Tibial artery (tissue), 4 donors: ENCODE measurements at regions of chr1 and their contacts with region 1.

Region 1: DNA sequence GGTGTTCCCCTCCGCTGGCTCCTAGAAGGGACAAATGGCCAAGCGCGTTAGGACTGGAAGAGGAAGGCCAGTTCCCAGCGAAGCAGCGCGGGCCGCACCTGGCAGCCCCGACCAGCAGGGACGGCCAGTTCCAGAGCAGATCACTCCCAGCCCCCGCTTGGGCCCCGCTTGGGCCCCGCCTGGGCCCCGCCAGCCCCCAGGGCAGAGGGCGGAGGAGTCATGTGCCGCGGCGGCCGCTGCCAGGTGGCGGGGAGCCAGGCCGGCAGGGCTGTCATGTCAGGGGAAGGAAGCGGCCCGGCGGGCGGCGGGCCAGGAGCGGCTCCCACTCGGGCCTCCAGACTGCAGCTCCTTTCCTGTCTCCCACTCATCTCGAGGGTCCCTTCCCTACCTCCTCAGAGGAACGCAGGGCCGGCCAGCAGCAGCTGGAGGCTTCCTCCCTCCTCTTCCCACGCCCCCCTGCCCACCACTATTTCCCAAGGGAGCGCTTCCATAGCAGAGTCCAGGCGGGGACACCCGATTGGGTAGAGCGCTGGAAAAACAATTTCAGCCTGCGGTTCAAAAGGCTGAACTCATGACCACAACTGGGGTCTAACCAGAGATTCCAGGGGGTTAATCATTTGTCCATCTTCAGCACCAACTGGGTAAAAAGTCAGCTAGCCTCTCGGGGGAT is 16.5 kb downstream of the ZNF697 start:
- DNase-seq: peak; percentile 83 to 92
- H3K4me3 ChIP-seq: peak overlapping the region; percentile 38 to 54
- H3K27ac ChIP-seq: peak overlapping the region; percentile 80
- H3K4me1 ChIP-seq: peaks cover 0 to 39% (median 36%) of the 10 kb centered on the region in 4 donors
- H3K27me3 ChIP-seq: no peaks in the 10 kb centered on the region
- CTCF ChIP-seq: peak in 1 of 2 experiments; percentile 17

Region 2: GRCh38 chr1:119647734-119648619 is 16.4 kb after region 1 on chr1 and contains the start of gene ZNF697:
- intact Hi-C with region 1: loop called (anchors 2 kb)
- DNase-seq: peak; percentile 97 to 98
- H3K4me3 ChIP-seq: peak within 1 kb of the TSS; percentile 79 to 98
- H3K27ac ChIP-seq: peak within 1 kb of the TSS; percentile 81 to 89
- H3K4me1 ChIP-seq: peaks cover 0 to 13% (median 7%) of the 10 kb centered on the region in 4 donors
- H3K27me3 ChIP-seq: no peaks in the 10 kb centered on the region
- CTCF ChIP-seq: peak in 1 of 2 experiments; percentile 40